ENCODE measurements at regions of chr17 and their contacts with region 1.

Region 1: GRCh38 chr17:38485146-38485468 is 56.8 kb downstream of the ARHGAP23 start:
- DNase-seq: no peak
- H3K4me3 ChIP-seq: no peak overlapping the region
- H3K27ac ChIP-seq: no peak overlapping the region
- H3K4me1 ChIP-seq: no peaks in the 10 kb centered on the region
- H3K27me3 ChIP-seq: no peaks in the 10 kb centered on the region
- CTCF ChIP-seq: no peak
- EP300 ChIP-seq: no peak
- POLR2A ChIP-seq: no peak

Region 2: GRCh38 chr17:38322091-38322779 is 162.9 kb before region 1 on chr17:
- intact Hi-C with region 1: no loop called
- DNase-seq: peak; percentile 45 to 76 (median 64)
- H3K4me3 ChIP-seq: no peak overlapping the region
- H3K27ac ChIP-seq: no peak overlapping the region
- H3K4me1 ChIP-seq: no peaks in the 10 kb centered on the region
- H3K27me3 ChIP-seq: no peaks in the 10 kb centered on the region
- CTCF ChIP-seq: peak in 2 of 3 donors; percentile 25 to 59
- EP300 ChIP-seq: no peak
- POLR2A ChIP-seq: no peak

Region 3: DNA sequence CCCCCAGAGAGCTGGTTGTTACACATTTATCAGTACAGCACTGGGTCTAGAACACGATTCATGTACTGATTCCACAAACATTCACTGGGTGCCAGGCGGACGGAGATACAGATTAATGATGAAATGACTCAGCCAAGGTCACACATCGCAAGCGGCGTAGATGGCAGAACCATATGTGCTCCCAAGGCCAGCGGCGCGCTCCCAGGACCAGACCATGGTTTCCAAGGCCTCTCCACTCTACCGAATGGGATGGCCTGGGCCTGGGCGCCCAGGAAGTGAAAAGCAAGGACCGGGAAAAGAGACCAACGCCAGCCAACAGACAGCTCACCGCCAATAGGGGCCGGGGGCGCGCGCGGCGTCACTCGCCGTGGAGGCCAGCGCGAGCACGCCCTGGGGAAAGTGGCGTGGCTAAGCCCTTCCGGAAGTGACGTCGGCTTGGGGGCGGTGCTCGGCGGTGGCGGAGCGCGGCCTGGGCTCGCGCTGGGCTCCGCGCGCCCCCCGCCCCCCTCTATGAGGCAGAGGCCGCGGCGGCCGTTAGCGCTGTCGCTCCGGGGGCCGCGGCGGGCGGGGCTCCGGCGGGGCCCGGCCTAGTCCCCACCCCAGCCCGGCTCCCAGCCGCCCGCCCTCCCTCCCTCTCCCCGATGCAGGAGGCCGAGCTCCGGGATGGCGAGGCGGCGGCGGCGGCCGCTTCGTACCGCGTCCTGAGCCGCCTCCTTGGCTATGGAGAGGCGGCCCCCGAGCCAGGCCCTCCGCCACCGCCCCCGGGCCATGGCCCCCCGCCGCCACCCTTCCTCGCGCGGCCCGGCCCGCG is 133.5 kb before region 1 on chr17 and contains the start of gene SOCS7:
- intact Hi-C with region 1: loop called in 1 of 4 experiments (anchors 10 kb)
- DNase-seq: peak; percentile 95 to 97 (median 97)
- H3K4me3 ChIP-seq: peak within 1 kb of the TSS; percentile 64
- H3K27ac ChIP-seq: peak within 1 kb of the TSS; percentile 40 to 75
- H3K4me1 ChIP-seq: peaks cover 11% of the 10 kb centered on the region
- H3K27me3 ChIP-seq: no peaks in the 10 kb centered on the region
- CTCF ChIP-seq: no peak
- EP300 ChIP-seq: no peak
- POLR2A ChIP-seq: peak; percentile 79
- total RNA-seq, gene SOCS7: 12.8 to 23.8 (median 21.1) TPM

Region 4: DNA sequence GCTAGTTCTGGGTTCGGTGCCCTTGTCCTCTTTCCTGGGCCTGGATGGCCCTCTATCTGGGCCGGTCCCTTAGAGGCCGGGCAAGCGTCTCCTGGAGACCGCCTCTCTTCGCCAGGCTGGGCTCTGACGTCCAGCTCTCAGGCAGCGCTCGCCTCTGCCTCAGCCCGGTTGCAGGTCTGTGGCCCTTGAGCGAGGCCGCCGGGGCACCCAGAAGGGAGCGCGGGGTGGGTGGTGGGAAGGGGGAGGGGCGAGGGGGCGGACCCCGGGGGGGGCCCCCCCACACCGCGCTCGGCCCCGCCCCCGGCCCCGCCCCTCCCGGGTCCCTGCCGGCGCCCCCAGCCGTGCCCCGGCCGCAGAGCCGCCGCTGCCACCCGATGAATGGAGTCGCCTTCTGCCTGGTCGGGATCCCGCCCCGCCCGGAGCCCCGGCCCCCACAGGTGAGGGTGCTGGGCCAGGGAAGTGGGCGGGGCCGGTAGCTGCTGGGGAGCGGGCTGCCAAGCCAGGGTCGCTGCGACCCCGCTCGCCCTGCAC is 56.9 kb before region 1 on chr17 and contains the start of gene ARHGAP23:
- intact Hi-C with region 1: loop called in 3 of 4 experiments (anchors 5 to 10 kb)
- DNase-seq: peak; percentile 69 to 80 (median 75)
- H3K4me3 ChIP-seq: peak within 1 kb of the TSS; percentile 68
- H3K27ac ChIP-seq: peak within 1 kb of the TSS; percentile 84
- H3K4me1 ChIP-seq: peaks cover 3% of the 10 kb centered on the region
- H3K27me3 ChIP-seq: no peaks in the 10 kb centered on the region
- CTCF ChIP-seq: no peak
- EP300 ChIP-seq: no peak
- POLR2A ChIP-seq: no peak
- total RNA-seq, gene ARHGAP23: 13.7 to 76.4 (median 48.9) TPM

Region 5: GRCh38 chr17:38444151-38444550 is 41.0 kb before region 1 on chr17:
- intact Hi-C with region 1: loop called in 2 of 4 experiments (anchors 2 kb)
- DNase-seq: peak; percentile 64 to 79 (median 76)
- H3K4me3 ChIP-seq: no peak overlapping the region
- H3K27ac ChIP-seq: no peak overlapping the region
- H3K4me1 ChIP-seq: no peaks in the 10 kb centered on the region
- H3K27me3 ChIP-seq: no peaks in the 10 kb centered on the region
- CTCF ChIP-seq: peak; percentile 52 to 94 (median 93)
- EP300 ChIP-seq: no peak
- POLR2A ChIP-seq: no peak

Region 6: GRCh38 chr17:38628441-38628840 is 143.3 kb after region 1 on chr17:
- intact Hi-C with region 1: no loop called
- DNase-seq: no peak
- H3K4me3 ChIP-seq: no peak overlapping the region
- H3K27ac ChIP-seq: no peak overlapping the region
- H3K4me1 ChIP-seq: no peaks in the 10 kb centered on the region
- H3K27me3 ChIP-seq: no peaks in the 10 kb centered on the region
- CTCF ChIP-seq: no peak
- EP300 ChIP-seq: no peak
- POLR2A ChIP-seq: no peak